Activated T-helper 2 cell treated with anti-CD3 and anti-CD28 coated beads, Interferon-gamma antibody, Interleukin-2, Interleukin-4, amounts not matched to agents 10 μg/mL and 5 μg/mL and 100 μg/mL, durations not matched to agents 14 hours and 24 hours and 36 hours (primary cell): ENCODE measurements at regions of chr2 and their contacts with region 1.

Region 1: GRCh38 chr2:68062680-68063387 is at the start of gene C1D:
- DNase-seq: peak; percentile 90
- H3K4me3 Mint-ChIP-seq: peak within 1 kb of the TSS; percentile 89
- H3K27ac Mint-ChIP-seq: peak within 1 kb of the TSS; percentile 88
- H3K4me1 Mint-ChIP-seq: peaks cover 26% of the 10 kb centered on the region
- H3K27me3 Mint-ChIP-seq: peaks cover 24% of the 10 kb centered on the region
- total RNA-seq, gene C1D: 28.5 and 30.7 TPM in 2 replicates

Region 2: GRCh38 chr2:67397143-67397986 is 665.5 kb before region 1 on chr2 and contains the start of gene ETAA1:
- intact Hi-C with region 1: loop called (anchors 5 kb)
- DNase-seq: peak; percentile 90
- H3K4me3 Mint-ChIP-seq: peak within 1 kb of the TSS; percentile 94
- H3K27ac Mint-ChIP-seq: peak within 1 kb of the TSS; percentile 98
- H3K4me1 Mint-ChIP-seq: peaks cover 11% of the 10 kb centered on the region
- H3K27me3 Mint-ChIP-seq: no peaks in the 10 kb centered on the region
- total RNA-seq, gene ETAA1: 11.1 and 12.0 TPM in 2 replicates

Region 3: GRCh38 chr2:68157402-68158133 is 94.7 kb after region 1 on chr2 and contains the start of gene PNO1:
- intact Hi-C with region 1: loop called (anchors 5 kb)
- DNase-seq: peak; percentile 95
- H3K4me3 Mint-ChIP-seq: peak within 1 kb of the TSS; percentile 95
- H3K27ac Mint-ChIP-seq: peak within 1 kb of the TSS; percentile 99
- H3K4me1 Mint-ChIP-seq: peaks cover 40% of the 10 kb centered on the region
- H3K27me3 Mint-ChIP-seq: no peaks in the 10 kb centered on the region
- total RNA-seq, gene PNO1: 24.5 and 24.7 TPM in 2 replicates

Region 4: DNA sequence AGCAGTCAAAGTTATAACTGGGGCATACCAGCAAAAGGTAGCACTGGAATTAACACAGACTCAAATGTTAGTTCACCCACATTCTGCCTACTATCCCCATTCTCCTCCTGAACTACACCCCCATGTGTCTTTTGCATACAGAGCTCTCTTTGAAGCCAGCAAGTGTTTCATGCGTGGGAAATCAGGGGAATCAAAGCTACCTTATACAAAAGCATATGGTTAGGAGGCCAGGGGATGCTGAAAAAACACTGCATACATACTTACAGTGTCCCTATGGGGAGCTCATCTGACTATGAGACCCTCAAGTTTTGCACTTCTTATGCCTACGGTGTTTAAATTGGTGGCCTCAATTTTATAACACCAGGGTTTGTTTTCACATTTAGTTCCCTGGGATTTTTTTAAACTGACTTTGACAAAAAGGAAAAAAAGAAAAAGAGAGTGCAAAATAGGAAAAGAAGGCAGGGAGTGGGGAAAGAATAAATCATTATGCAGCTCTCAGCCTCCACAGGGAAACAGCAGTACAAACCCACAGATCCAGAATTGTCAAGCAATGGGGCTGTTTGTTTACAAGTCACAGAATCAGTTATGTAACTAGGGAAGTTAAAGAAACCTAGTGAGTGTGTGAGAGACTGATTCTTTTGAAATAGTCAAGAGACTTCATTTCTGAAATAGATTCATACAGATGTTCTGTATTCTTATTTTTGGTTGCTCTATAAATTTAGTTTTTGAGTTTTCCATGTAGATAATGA is 209.6 kb after region 1 on chr2:
- intact Hi-C with region 1: no loop called
- DNase-seq: no peak
- H3K4me3 Mint-ChIP-seq: no peak overlapping the region
- H3K27ac Mint-ChIP-seq: no peak overlapping the region
- H3K4me1 Mint-ChIP-seq: no peaks in the 10 kb centered on the region
- H3K27me3 Mint-ChIP-seq: peaks cover 47% of the 10 kb centered on the region